K562 (cell line): ENCODE measurements at regions of chr1 and their contacts with region 1.

Region 1: GRCh38 chr1:87151500-87152421 is 176.9 kb upstream of the LMO4 start:
- DNase-seq: peak; percentile 44 to 75 (median 60)
- ATAC-seq: peak; percentile 99
- H3K4me3 ChIP-seq: no peak overlapping the region
- H3K27ac ChIP-seq: no peak overlapping the region
- H3K4me1 ChIP-seq: peaks cover 0 to 7% of the 10 kb centered on the region in 2 experiments; a peak in 1 of 5 replicates
- H3K27me3 ChIP-seq: peaks cover 17 to 43% of the 10 kb centered on the region in 2 experiments; a peak in 4 of 5 replicates
- CTCF ChIP-seq: peak; percentile 60 to 76 (median 68)
- EP300 ChIP-seq: no peak
- POLR2A ChIP-seq: no peak
- RAD21 ChIP-seq: peak; percentile 69 to 80

Region 2: GRCh38 chr1:87266284-87266683 is 114.5 kb after region 1 on chr1:
- CTCF ChIA-PET with region 1: no interaction called
- POLR2A ChIA-PET with region 1: no interaction called
- in situ Hi-C with region 1: no loop called
- intact Hi-C with region 1: no loop called
- DNase-seq: no peak
- ATAC-seq: no peak
- H3K4me3 ChIP-seq: no peak overlapping the region
- H3K27ac ChIP-seq: no peak overlapping the region
- H3K4me1 ChIP-seq: no peaks in the 10 kb centered on the region
- H3K27me3 ChIP-seq: no peaks in the 10 kb centered on the region
- CTCF ChIP-seq: no peak
- EP300 ChIP-seq: no peak
- POLR2A ChIP-seq: no peak
- RAD21 ChIP-seq: no peak

Region 3: GRCh38 chr1:87279966-87280535 is 128.3 kb after region 1 on chr1:
- CTCF ChIA-PET with region 1: interaction called, 4 read pairs
- POLR2A ChIA-PET with region 1: no interaction called
- in situ Hi-C with region 1: no loop called
- intact Hi-C with region 1: loop called (anchors 5 kb)
- DNase-seq: peak in 1 of 4 experiments; percentile 14
- ATAC-seq: peak; percentile 49; the same call in 2 of the 3 replicates
- H3K4me3 ChIP-seq: no peak overlapping the region
- H3K27ac ChIP-seq: no peak overlapping the region
- H3K4me1 ChIP-seq: peaks cover 0 to 2% of the 10 kb centered on the region in 2 experiments; a peak in 2 of 5 replicates
- H3K27me3 ChIP-seq: peaks cover 0 to 8% of the 10 kb centered on the region in 2 experiments; a peak in 1 of 5 replicates
- CTCF ChIP-seq: peak in 2 of 3 experiments; percentile 31 to 41; a peak in 2 of 6 replicates
- EP300 ChIP-seq: no peak
- POLR2A ChIP-seq: no peak
- RAD21 ChIP-seq: peak in 1 of 2 experiments; percentile 54; a peak in 3 of 4 replicates

Region 4: GRCh38 chr1:88451856-88452255 is 1300.1 kb after region 1 on chr1:
- CTCF ChIA-PET with region 1: no interaction called
- POLR2A ChIA-PET with region 1: no interaction called
- in situ Hi-C with region 1: no loop called
- intact Hi-C with region 1: no loop called
- DNase-seq: no peak
- ATAC-seq: no peak
- H3K4me3 ChIP-seq: no peak overlapping the region
- H3K27ac ChIP-seq: no peak overlapping the region
- H3K4me1 ChIP-seq: no peaks in the 10 kb centered on the region
- H3K27me3 ChIP-seq: no peaks in the 10 kb centered on the region
- CTCF ChIP-seq: no peak
- EP300 ChIP-seq: no peak
- POLR2A ChIP-seq: no peak
- RAD21 ChIP-seq: no peak